Cardiac septum (tissue), 1 donor: ENCODE measurements at regions of chr17 and their contacts with region 1.

Region 1: DNA sequence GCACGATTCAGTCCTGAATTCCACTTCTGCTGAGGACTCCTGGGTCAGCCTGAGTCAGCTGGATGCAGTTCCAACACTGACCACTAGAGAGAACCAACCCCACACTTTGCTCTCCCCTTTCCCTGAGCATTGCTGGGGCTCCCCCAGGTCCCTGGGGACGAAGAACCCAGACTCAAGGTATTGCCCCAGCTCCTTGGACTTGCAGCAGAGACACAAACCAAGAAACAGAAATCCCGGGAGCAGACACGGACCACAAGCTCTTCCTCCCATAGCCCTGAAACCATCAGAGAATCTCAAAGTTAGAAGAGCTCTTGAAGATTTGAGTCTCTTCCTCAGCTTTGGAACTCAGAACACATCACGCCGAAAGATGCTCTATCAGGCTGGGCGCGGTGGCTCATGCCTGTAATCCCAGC is 678 bp upstream of the GH1 start:
- DNase-seq: no peak

Region 2: GRCh38 chr17:63984651-63985386 is 65.5 kb after region 1 on chr17:
- intact Hi-C with region 1: loop called (anchors 2 kb)
- DNase-seq: no peak

Region 3: GRCh38 chr17:64025732-64026294 is 106.5 kb after region 1 on chr17:
- intact Hi-C with region 1: loop called (anchors 2 kb)
- DNase-seq: peak; percentile 86

Region 4: GRCh38 chr17:64129764-64130558 is 210.6 kb after region 1 on chr17 and contains the start of gene ERN1:
- intact Hi-C with region 1: loop called (anchors 5 kb)
- DNase-seq: peak; percentile 98
- total RNA-seq, gene ERN1: 6.9 TPM

Region 5: DNA sequence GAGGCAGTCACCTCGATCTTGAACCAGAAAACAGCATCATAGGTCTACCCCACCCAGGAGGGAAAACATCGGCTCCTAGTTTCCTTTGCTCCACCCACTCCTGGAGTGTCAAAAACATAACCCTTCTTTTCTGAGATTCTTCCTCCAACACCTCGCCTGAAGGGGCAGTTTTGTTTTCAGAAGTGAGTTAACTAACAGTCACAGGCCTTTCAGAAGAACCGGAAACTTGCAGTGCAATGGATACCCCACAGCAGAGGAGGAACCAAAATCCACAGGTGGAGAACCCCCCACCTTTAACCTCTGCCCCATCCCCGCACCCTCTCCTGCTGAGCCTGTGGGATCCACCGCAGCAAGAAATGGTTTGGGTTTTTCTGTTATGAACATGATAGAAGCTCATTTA is 351.6 kb after region 1 on chr17:
- intact Hi-C with region 1: no loop called
- DNase-seq: no peak